Gastrocnemius medialis (tissue), 4 donors: ENCODE measurements at regions of chr13 and their contacts with region 1.

Region 1: GRCh38 chr13:23921451-23921888 is 24.2 kb upstream of the C1QTNF9B start:
- DNase-seq: no peak
- ATAC-seq: peak in 1 of 2 donors; percentile 44
- H3K4me3 ChIP-seq: no peak overlapping the region
- H3K27ac ChIP-seq: no peak overlapping the region
- H3K4me1 ChIP-seq: no peaks in the 10 kb centered on the region
- H3K27me3 ChIP-seq: no peaks in the 10 kb centered on the region
- CTCF ChIP-seq: peak; percentile 42 to 64 (median 58)
- POLR2A ChIP-seq: no peak

Region 2: GRCh38 chr13:23856008-23856750 is 65.3 kb before region 1 on chr13:
- in situ Hi-C with region 1: no loop called
- intact Hi-C with region 1: no loop called
- DNase-seq: no peak
- ATAC-seq: peak; percentile 63 to 78
- H3K4me3 ChIP-seq: no peak overlapping the region
- H3K27ac ChIP-seq: no peak overlapping the region
- H3K4me1 ChIP-seq: no peaks in the 10 kb centered on the region
- H3K27me3 ChIP-seq: no peaks in the 10 kb centered on the region
- CTCF ChIP-seq: no peak
- POLR2A ChIP-seq: no peak

Region 3: DNA sequence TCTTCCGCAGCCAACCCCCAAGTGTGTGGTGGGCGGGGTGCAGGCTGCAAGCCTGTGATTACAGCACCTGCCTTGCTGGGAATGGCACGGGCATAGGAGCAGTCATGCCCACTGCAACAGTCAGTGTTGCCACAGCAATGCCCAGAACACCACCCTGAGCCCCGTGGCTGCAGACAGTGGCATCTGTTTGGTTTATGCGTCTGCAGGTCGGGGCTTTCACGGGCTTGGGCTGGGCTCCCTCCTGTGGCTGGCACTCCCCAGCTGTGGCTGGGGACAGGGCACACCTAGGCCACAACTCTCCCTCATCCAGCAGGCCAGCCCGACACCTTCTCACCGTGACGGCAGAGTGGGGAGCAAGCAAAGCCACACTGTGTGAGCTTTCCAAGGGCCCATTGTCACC is 91.2 kb after region 1 on chr13:
- in situ Hi-C with region 1: no loop called
- intact Hi-C with region 1: loop called (anchors 10 kb)
- DNase-seq: no peak
- ATAC-seq: no peak
- H3K4me3 ChIP-seq: no peak overlapping the region
- H3K27ac ChIP-seq: no peak overlapping the region
- H3K4me1 ChIP-seq: no peaks in the 10 kb centered on the region
- H3K27me3 ChIP-seq: no peaks in the 10 kb centered on the region
- CTCF ChIP-seq: no peak
- POLR2A ChIP-seq: no peak

Region 4: GRCh38 chr13:24168392-24168750 is 246.9 kb after region 1 on chr13:
- in situ Hi-C with region 1: no loop called
- intact Hi-C with region 1: no loop called
- DNase-seq: no peak
- ATAC-seq: no peak
- H3K4me3 ChIP-seq: no peak overlapping the region
- H3K27ac ChIP-seq: no peak overlapping the region
- H3K4me1 ChIP-seq: no peaks in the 10 kb centered on the region
- H3K27me3 ChIP-seq: no peaks in the 10 kb centered on the region
- CTCF ChIP-seq: no peak
- POLR2A ChIP-seq: no peak